A549 (cell line): ENCODE measurements at regions of chr7 and their contacts with region 1.

Region 1: DNA sequence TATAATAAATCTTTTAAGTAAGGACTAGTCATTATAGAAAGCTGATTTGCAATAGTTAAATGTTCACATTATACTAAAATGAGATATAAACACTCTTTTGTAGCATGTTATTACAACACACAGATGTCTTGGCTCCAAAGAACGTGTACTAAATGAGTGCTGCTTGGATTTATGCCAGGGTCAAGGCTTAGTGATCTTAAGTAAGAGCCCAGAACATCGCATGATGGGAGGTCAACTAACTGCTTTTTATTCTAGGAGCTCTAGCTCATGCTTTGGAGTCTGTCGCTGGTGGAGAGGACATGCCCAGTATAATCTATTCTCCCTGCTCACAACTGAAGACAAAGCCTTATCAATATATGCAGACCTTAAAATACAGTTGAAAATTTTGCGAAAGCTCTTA is 315.1 kb downstream of the BBS9 start:
- DNase-seq: no peak
- ATAC-seq: no peak
- H3K4me3 ChIP-seq: no peak overlapping the region
- H3K27ac ChIP-seq: no peak overlapping the region
- H3K4me1 ChIP-seq: no peaks in the 10 kb centered on the region
- CTCF ChIP-seq: no peak
- EP300 ChIP-seq: no peak
- POLR2A ChIP-seq: no peak
- RAD21 ChIP-seq: no peak

Region 2: DNA sequence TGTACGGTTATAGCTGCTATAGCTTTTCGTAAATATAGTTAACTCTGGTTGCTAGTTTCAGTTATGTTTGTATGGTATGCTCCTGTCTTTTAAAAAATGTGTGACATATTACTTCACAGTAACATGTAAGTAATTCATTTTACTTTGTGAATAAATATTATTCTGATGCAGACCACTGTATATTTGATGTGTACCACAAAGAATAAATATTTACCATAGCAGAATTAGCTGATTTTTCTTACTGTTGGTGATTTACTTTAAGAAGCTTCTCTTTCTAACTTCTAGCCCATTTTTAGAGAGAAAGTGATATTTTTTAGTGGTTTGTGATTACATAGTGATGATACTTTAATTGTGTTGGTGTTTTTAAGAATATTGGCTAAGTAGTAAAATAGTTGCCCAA is 22.4 kb before region 1 on chr7:
- CTCF ChIA-PET with region 1: no interaction called
- POLR2A ChIA-PET with region 1: no interaction called
- DNase-seq: no peak
- ATAC-seq: no peak
- H3K4me3 ChIP-seq: no peak overlapping the region
- H3K27ac ChIP-seq: no peak overlapping the region
- H3K4me1 ChIP-seq: no peaks in the 10 kb centered on the region
- CTCF ChIP-seq: no peak
- EP300 ChIP-seq: no peak
- POLR2A ChIP-seq: no peak
- RAD21 ChIP-seq: no peak

Region 3: GRCh38 chr7:33432821-33433220 is 11.7 kb before region 1 on chr7:
- CTCF ChIA-PET with region 1: no interaction called
- POLR2A ChIA-PET with region 1: no interaction called
- DNase-seq: no peak
- ATAC-seq: no peak
- H3K4me3 ChIP-seq: no peak overlapping the region
- H3K27ac ChIP-seq: no peak overlapping the region
- H3K4me1 ChIP-seq: no peaks in the 10 kb centered on the region
- CTCF ChIP-seq: no peak
- EP300 ChIP-seq: no peak
- POLR2A ChIP-seq: no peak
- RAD21 ChIP-seq: no peak

Region 4: GRCh38 chr7:33459340-33459751 is 14.8 kb after region 1 on chr7:
- CTCF ChIA-PET with region 1: interaction called, 14 read pairs
- POLR2A ChIA-PET with region 1: no interaction called
- DNase-seq: peak in 1 of 2 experiments; percentile 65
- ATAC-seq: peak; percentile 99 to 100
- H3K4me3 ChIP-seq: no peak overlapping the region
- H3K27ac ChIP-seq: 0 out of 6 replicates have a peak overlapping the region, but pooled peaks of 1 of the 2 experiments have one; percentile 43
- H3K4me1 ChIP-seq: no peaks in the 10 kb centered on the region
- CTCF ChIP-seq: peak; percentile 65
- EP300 ChIP-seq: no peak
- POLR2A ChIP-seq: no peak
- RAD21 ChIP-seq: peak; percentile 46 to 64

Region 5: GRCh38 chr7:33873981-33874753 is 429.7 kb after region 1 on chr7:
- CTCF ChIA-PET with region 1: no interaction called
- POLR2A ChIA-PET with region 1: no interaction called
- DNase-seq: peak; percentile 33 to 55
- ATAC-seq: peak; percentile 90 to 94
- H3K4me3 ChIP-seq: 0 out of 3 replicates have a peak overlapping the region, but pooled peaks have one; percentile 2
- H3K27ac ChIP-seq: peak overlapping the region; percentile 61 to 74
- H3K4me1 ChIP-seq: peaks cover 22% of the 10 kb centered on the region
- CTCF ChIP-seq: no peak
- EP300 ChIP-seq: no peak
- POLR2A ChIP-seq: no peak
- RAD21 ChIP-seq: no peak